ENCODE measurements at regions of chr1 and their contacts with region 1.

Region 1: DNA sequence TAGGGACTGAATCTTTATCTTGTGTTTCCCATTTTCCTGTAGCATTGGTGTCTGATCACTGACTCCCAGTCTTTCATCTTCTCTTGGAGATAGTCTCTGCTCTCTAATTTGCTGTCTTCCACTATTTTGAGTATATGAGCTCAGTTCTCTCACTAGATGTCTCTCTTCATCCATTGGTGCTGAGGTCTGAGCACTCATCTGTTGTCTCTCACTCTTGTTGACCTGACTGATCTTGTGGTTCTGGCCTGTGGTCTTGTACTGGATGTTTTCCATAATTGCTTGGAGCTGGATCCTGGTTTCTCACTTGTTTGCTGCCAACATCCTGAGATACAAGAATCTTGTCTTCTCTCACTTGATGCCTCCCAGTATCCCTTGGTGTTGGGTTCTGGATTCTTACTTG is 25.1 kb upstream of the S100A11 start:
- DNase-seq: no peak
- H3K4me3 ChIP-seq: no peak overlapping the region
- H3K4me1 ChIP-seq: no peaks in the 10 kb centered on the region
- H3K27me3 ChIP-seq: peaks cover 11% of the 10 kb centered on the region; the same call in 1 of the 2 replicates

Region 2: DNA sequence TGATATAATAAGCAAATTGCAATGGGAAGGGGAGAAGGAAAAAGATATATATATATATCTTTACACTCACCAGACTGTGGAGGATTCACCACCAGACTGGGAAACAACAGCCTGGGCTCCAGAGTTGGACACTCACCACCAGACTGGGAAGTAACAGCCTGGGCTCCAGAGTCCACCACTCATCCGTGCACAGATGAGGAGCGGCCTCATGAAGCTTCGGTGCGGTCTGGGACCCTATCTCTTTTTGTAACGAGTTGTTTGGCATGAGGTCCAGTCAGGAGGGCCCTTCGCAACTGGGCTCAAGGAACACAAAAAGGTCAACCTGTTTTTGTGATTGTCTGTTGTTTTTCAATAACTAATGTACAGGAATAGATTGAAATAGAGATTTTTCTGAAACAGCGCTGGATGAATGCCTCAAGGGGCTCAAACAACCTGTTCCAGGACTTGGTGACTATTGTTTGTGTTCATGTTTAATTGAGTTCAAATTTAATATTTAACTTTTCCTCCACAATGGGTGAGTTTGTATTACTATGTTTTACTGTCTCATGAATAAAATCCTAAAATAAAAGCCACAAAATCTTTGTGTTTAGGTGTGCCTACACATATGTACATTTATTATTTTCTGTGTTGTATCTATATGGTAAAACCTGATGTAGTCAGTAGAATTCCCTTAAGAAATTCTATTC is 108.4 kb before region 1 on chr1:
- in situ Hi-C with region 1: no loop called
- DNase-seq: no peak
- H3K4me3 ChIP-seq: no peak overlapping the region
- H3K4me1 ChIP-seq: peaks cover 3% of the 10 kb centered on the region; the same call in 1 of the 2 replicates
- H3K27me3 ChIP-seq: no peaks in the 10 kb centered on the region; the same call in 1 of the 2 replicates

Region 3: DNA sequence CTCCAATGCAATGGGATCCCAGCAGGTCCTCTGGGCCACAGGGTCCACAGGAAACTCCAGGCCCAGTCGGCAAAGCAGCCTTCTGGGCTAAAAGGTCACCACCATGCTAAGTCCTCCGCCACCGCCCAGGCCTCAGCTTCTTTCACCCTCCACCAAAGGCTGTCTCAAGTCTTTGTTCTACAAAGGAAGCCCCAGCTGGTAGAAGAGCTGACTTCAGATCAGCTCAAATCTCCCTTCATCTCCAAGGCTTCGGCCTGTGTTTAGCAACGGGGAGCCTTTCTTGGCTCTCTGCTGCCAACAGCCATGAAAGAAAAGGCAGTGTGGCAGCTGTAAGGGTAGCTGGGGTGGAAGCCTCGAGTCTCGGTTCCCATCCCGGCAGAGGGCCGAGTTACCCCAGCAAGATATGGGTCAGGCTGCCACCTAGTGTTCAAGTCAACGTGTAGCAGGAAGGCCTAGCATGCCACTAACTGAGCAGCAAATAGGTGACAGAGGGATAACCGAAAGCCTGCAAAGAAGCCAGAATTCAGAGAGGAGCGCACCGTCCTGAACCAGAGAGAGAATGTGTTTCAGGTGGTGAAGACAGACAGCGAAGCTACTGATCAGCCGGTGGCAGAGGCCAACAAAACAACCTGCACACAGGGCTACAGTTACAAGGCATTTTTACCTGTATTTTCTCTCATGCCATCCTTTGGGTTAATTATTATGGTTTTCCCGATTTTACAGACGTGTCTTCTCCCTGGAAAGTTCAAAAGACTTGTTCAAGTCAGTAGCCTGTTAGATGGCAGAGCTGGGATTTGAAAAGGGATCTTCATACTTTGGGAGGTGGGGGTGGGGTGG is 378.9 kb after region 1 on chr1:
- in situ Hi-C with region 1: loop called (anchors 10 kb)
- DNase-seq: peak; percentile 57 to 77
- H3K4me3 ChIP-seq: no peak overlapping the region
- H3K4me1 ChIP-seq: no peaks in the 10 kb centered on the region
- H3K27me3 ChIP-seq: no peaks in the 10 kb centered on the region

Measured in HAP-1 (cell line).